ENCODE measurements at regions of chr12 and their contacts with region 1.

Region 1: DNA sequence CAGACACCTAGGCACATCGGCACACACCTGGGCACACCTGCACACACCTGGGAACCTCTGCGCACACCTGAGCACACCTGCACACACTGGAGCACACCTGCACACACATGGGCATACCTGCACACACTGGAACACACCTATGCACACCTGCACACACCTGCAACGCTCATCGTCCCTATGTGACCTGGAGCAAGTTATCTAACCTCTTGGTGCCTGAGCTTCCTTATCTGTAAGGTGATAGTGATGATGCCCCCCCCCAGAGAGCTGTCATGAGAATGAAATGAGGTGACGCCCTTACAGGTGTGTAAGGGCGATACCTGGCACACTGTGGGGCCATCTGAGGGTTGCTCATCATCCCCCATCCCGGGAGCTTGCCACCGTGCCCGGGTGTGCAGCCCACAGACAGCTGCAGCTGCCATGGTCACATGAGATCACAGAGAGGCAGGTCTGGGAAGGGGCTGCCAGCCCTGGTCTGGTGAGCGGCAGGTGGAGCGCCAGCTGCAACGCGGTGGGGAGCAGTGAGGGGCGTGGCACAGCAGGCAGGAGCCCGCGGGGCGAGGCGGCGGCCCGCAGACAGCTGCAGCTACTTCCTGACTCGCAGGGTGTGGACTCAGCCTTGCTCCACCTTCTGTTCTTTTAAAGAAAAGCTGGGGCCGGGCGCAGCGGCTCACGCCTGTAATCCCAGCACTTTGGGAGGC is 59.9 kb upstream of the FBRSL1 start:
- DNase-seq: no peak
- H3K4me3 ChIP-seq: peak overlapping the region in 1 of 3 donors; percentile 32
- H3K27ac ChIP-seq: peak overlapping the region in 1 of 2 donors; percentile 87
- H3K4me1 ChIP-seq: peaks cover 0 to 3% of the 10 kb centered on the region in 2 donors
- H3K27me3 ChIP-seq: peaks cover 0 to 23% of the 10 kb centered on the region in 2 donors
- CTCF ChIP-seq: no peak
- POLR2A ChIP-seq: no peak

Region 2: GRCh38 chr12:132397152-132397933 is 32.8 kb before region 1 on chr12:
- intact Hi-C with region 1: loop called (anchors 1 kb)
- DNase-seq: no peak
- H3K4me3 ChIP-seq: no peak overlapping the region
- H3K27ac ChIP-seq: no peak overlapping the region
- H3K4me1 ChIP-seq: no peaks in the 10 kb centered on the region
- H3K27me3 ChIP-seq: peaks cover 3 to 87% of the 10 kb centered on the region in 2 donors
- CTCF ChIP-seq: no peak
- POLR2A ChIP-seq: no peak

Region 3: DNA sequence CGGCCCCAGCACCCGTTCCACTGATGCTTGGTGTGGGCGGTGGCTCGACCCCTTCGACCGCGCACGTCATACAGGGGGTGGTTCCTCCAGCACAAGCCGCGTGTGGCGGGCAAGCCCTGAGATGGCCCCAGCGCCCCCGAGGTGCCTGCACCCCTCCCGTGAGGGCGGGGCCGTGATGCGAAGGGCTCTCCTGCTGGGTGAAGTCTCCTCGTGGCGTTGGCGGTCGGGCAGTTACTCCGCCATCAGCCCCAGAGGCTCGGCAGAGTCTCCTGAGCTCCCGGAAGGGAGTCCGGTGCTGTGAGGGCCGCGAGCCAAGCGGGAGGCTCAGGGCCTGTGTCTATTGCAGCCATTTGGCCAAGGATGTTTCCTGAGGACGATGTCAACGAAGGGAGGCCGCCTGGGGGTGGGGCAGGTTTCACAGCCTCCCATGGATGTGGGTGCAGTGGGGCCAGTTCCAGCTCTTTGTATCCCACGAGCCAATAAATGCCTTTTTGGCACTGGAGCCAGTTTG is 22.6 kb before region 1 on chr12:
- intact Hi-C with region 1: no loop called
- DNase-seq: no peak
- H3K4me3 ChIP-seq: peak overlapping the region in 2 of 3 donors; percentile 38 to 62
- H3K27ac ChIP-seq: no peak overlapping the region
- H3K4me1 ChIP-seq: no peaks in the 10 kb centered on the region
- H3K27me3 ChIP-seq: peaks cover 0 to 49% of the 10 kb centered on the region in 2 donors
- CTCF ChIP-seq: no peak
- POLR2A ChIP-seq: no peak

Region 4: DNA sequence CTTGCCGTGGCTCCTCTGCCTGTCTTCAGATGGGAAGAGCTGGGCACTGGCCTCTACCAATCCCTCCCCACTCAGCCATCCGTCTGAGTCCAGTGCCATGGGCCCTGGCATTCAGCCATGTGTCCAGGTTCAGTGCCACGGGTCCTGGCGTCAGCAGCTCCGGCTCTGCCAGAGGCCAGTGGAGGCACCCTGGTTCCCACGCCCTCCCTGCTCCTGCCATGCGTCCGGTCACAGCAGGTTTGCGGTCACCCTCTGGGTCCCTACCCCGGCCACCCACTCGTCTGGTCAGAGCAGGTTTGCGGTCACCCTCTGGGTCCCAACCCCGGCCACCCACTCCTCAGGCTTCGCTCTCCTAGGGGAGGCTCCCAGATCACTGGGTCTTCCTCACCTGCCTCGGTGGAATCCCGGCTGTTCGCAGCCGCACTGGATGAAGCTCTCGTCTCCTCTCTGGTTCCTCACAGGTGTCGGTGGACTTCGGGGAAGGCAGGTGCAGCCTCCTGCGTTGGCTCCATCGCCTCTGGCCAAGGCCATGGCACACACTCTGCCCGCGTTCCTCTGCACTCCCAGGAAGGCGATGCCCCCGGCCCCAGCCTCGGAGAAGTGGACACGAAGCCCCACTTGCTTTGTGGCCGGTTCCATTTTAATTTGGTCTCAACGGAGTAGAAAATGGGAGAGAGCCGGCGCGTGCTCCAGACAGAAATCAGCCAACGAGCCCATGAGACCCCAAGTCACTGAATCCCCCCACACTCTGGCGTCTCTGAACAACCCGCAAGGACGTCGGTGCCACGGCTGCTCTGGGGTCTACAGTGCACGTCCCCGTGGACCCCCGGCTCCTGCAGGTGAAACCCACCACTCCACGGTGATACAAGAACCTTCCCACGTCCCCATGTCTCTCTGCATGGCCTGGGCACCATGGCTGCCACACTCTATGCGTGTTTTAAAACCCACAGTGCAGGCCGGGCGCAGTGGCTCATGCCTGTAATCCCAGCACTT is 12.1 kb after region 1 on chr12:
- intact Hi-C with region 1: loop called (anchors 1 kb)
- DNase-seq: no peak
- H3K4me3 ChIP-seq: no peak overlapping the region
- H3K27ac ChIP-seq: no peak overlapping the region
- H3K4me1 ChIP-seq: no peaks in the 10 kb centered on the region
- H3K27me3 ChIP-seq: peaks cover 0 to under 1% of the 10 kb centered on the region in 2 donors
- CTCF ChIP-seq: no peak
- POLR2A ChIP-seq: no peak

Region 5: DNA sequence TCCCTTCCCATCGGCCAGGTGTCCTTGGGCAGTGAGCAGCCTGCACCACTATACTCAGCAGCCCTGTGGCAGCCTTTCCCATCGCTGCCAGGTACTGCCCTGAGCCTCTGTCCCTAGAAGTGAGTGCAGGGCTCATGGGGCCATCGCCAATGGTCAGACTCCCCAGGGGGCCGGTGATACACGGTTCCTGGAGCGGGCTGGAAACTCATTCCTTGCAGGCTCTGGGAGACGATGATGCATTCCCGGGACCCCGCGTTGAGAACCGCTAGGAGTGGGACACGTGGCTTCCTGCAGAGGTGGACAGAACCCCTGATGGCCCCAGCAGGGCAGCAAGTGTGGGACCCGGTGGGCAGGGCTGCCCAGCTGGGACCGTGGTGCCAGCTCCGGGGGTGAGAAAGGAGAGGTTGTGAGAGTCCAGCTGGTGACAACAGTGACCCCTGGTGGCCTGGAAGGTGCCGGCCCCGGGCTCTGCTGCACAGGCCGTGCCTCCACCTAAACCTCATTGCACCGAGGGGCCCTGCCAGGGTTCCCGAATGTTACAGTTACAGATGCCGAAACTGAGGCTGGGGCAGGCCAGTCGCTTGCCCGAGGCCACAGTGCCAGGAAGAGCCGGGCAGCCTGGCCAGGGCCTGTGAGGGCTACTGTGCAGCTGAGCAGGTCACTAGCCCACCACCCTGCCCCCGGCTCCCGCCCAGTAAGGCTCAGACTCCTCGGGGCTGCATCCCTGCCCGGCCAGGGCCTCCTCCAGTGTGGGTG is 93.7 kb after region 1 on chr12:
- intact Hi-C with region 1: loop called (anchors 10 kb)
- DNase-seq: peak; percentile 41 to 74
- H3K4me3 ChIP-seq: peak overlapping the region in 1 of 3 donors; percentile 22
- H3K27ac ChIP-seq: no peak overlapping the region
- H3K4me1 ChIP-seq: peaks cover 3 to 16% of the 10 kb centered on the region in 2 donors
- H3K27me3 ChIP-seq: no peaks in the 10 kb centered on the region
- CTCF ChIP-seq: peak in 2 of 3 donors; percentile 52 to 59
- POLR2A ChIP-seq: no peak

Measured in breast epithelium (tissue), 4 donors.